Right cardiac atrium (tissue), 5 donors: ENCODE measurements at regions of chr17 and their contacts with region 1.

Region 1: GRCh38 chr17:2390199-2390836 is 10.5 kb downstream of the MNT start:
- DNase-seq: peak in 2 of 3 donors; percentile 61 to 78
- ATAC-seq: peak in 1 of 2 donors; percentile 12
- H3K4me3 ChIP-seq: no peak overlapping the region
- H3K27ac ChIP-seq: no peak overlapping the region
- H3K4me1 ChIP-seq: peaks cover 3% of the 10 kb centered on the region
- H3K27me3 ChIP-seq: no peaks in the 10 kb centered on the region

Region 2: DNA sequence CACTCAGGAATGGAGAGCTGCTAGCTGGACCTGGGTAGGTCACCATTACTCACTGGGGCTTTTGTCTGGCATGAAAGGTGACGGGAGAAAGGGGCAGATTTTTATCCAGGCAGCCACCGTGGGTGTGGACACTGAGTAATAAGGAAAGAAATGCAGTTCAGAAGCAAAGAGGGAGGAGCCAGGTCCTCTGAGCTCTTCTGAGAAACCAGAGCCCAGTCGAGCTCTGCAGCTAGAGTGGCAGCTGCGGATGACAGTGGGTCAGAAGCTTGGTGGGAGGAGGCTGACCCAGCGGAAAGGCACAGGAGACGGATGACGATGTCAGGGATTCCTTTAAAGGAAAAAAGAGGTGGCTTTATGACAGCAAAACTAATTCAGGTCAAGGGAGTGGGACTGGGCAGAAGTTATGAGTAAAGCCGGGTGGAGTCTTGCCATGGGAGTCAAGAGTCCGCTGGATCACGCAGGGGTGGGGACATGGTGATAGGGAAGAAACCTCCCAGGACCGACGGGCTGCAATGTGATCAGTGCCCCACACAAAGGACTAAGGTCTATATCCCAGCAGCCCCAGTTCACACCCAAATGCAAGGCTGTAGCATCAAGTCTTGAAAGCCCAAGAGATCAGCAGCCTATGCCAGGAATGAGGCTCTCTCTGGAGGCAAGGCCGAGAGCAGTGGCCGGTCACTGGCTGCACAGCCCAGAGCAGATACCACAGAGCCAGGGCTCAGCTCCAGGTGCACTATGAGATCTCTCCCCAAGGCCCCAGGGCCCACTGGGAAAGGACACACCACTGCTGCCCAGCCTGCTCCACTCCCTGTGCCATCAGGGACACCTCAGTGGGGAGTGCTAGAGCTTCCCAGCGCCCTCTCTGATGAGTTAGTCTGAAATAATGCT is 16.8 kb after region 1 on chr17:
- intact Hi-C with region 1: loop called in 1 of 4 experiments (anchors 2 kb)
- DNase-seq: peak; percentile 80 to 83 (median 83)
- ATAC-seq: peak; percentile 73 to 88
- H3K4me3 ChIP-seq: no peak overlapping the region
- H3K27ac ChIP-seq: peak overlapping the region; percentile 89
- H3K4me1 ChIP-seq: peaks cover 6% of the 10 kb centered on the region
- H3K27me3 ChIP-seq: no peaks in the 10 kb centered on the region

Region 3: DNA sequence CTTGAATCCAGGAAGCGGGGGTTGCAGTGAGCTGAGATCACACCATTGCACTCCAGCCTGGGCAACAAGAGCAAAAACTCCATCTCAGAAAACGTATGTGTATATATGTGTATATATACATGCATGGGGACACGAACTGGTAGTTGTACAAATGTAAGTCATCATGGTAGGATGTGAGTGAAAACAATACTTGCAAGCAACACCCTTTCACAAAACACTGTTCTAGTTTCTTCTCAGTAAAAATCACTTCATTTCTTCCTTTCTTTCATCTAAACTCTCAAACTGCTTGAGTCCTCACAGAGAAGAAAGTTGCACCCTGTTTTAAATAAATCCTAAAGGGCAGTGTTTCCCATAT is 69.6 kb after region 1 on chr17:
- intact Hi-C with region 1: no loop called
- DNase-seq: no peak
- ATAC-seq: no peak
- H3K4me3 ChIP-seq: no peak overlapping the region
- H3K27ac ChIP-seq: no peak overlapping the region
- H3K4me1 ChIP-seq: no peaks in the 10 kb centered on the region
- H3K27me3 ChIP-seq: no peaks in the 10 kb centered on the region